ENCODE measurements at regions of chr9 and their contacts with region 1.

Region 1: GRCh38 chr9:72038890-72039410 is 21.5 kb downstream of the C9orf57 start:
- DNase-seq: peak; percentile 74 to 81
- ATAC-seq: peak; percentile 91 to 96
- H3K4me3 ChIP-seq: no peak overlapping the region
- H3K27ac ChIP-seq: no peak overlapping the region; a peak in 2 of 6 replicates
- H3K4me1 ChIP-seq: peaks cover 7% of the 10 kb centered on the region; the same call in 2 of the 3 replicates
- CTCF ChIP-seq: peak; percentile 90
- EP300 ChIP-seq: no peak
- POLR2A ChIP-seq: no peak
- RAD21 ChIP-seq: peak; percentile 98

Region 2: GRCh38 chr9:71549023-71549422 is 489.9 kb before region 1 on chr9:
- CTCF ChIA-PET with region 1: no interaction called
- POLR2A ChIA-PET with region 1: no interaction called
- DNase-seq: no peak
- ATAC-seq: no peak
- H3K4me3 ChIP-seq: no peak overlapping the region
- H3K27ac ChIP-seq: no peak overlapping the region
- H3K4me1 ChIP-seq: 0 out of 3 replicates have a peak, but pooled peaks cover 4% of the 10 kb centered on the region
- CTCF ChIP-seq: no peak
- EP300 ChIP-seq: no peak
- POLR2A ChIP-seq: no peak
- RAD21 ChIP-seq: no peak

Region 3: DNA sequence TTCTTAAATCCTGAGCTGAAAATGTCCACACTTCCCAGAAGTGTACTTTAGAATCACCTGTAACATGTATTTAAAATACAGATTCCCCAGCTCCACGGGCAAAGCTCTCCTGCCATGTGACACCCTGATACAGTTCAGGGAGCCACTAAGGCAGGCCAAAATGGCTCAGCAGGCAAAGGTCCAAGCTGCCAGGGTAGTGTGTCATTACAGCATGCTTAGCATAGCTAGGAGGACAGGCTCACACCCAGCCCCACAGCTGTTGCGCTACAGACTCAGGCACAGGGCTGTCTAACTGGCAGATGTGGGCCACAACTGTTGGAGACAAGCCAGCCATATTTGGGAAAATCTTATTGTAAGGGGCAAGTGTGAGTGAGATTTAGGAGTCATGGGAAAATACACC is 54.5 kb before region 1 on chr9:
- CTCF ChIA-PET with region 1: no interaction called
- POLR2A ChIA-PET with region 1: no interaction called
- DNase-seq: no peak
- ATAC-seq: no peak
- H3K4me3 ChIP-seq: no peak overlapping the region
- H3K27ac ChIP-seq: no peak overlapping the region
- H3K4me1 ChIP-seq: no peaks in the 10 kb centered on the region
- CTCF ChIP-seq: no peak
- EP300 ChIP-seq: no peak
- POLR2A ChIP-seq: no peak
- RAD21 ChIP-seq: no peak

Region 4: DNA sequence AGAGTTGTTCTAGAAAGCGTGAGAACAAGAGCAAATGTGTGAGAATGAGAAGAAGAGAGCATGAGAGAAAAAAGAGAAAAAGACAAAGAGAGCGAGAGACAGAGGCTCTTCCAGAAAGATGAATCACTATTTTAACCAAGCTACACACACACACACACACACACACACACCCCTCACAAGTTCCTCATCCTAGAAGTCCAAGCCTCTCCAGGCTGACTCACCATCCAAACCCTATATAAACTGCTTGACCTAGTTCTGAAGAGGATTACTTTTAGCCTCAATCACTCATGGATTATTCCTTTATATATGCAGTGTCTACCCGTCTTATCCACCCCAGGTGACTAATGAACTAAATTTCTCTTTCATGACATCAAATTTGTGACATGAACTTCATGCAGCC is 16.1 kb before region 1 on chr9:
- CTCF ChIA-PET with region 1: interaction called, 44 read pairs
- POLR2A ChIA-PET with region 1: no interaction called
- DNase-seq: peak in 1 of 2 experiments; percentile 58
- ATAC-seq: peak in 1 of 2 experiments; percentile 49; a peak in 2 of 6 replicates
- H3K4me3 ChIP-seq: no peak overlapping the region
- H3K27ac ChIP-seq: no peak overlapping the region
- H3K4me1 ChIP-seq: peaks cover 10% of the 10 kb centered on the region; the same call in 2 of the 3 replicates
- CTCF ChIP-seq: no peak
- EP300 ChIP-seq: no peak
- POLR2A ChIP-seq: no peak
- RAD21 ChIP-seq: no peak

Region 5: GRCh38 chr9:72065076-72065475 is 26.1 kb after region 1 on chr9:
- CTCF ChIA-PET with region 1: interaction called, 13 read pairs
- POLR2A ChIA-PET with region 1: no interaction called
- DNase-seq: no peak
- ATAC-seq: peak in 1 of 2 experiments; percentile 43; a peak in 3 of 6 replicates
- H3K4me3 ChIP-seq: no peak overlapping the region
- H3K27ac ChIP-seq: no peak overlapping the region
- H3K4me1 ChIP-seq: no peaks in the 10 kb centered on the region
- CTCF ChIP-seq: no peak
- EP300 ChIP-seq: no peak
- POLR2A ChIP-seq: no peak
- RAD21 ChIP-seq: no peak

Region 6: DNA sequence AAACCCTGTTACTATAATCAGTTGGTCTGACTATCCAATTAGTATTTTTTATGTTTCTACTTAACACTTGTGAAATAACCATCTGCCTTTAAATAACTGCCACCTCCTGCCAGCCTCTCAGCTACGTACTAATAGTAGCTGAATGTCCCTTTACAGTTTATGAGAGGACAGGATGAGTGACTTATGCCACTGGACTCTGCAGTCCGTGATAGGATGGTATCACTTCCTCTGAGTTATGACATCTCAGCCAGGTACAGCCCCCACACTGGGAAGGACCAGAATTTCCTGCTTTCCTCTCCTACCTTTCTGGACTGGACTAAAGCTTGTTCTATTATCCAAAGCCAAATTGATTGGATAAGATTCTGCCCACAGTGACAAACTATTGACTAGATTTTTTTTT is 223.1 kb after region 1 on chr9:
- CTCF ChIA-PET with region 1: interaction called, 11 read pairs
- POLR2A ChIA-PET with region 1: no interaction called
- DNase-seq: no peak
- ATAC-seq: 0 out of 6 replicates have a peak, but pooled peaks of 1 of the 2 experiments have one; percentile 19
- H3K4me3 ChIP-seq: no peak overlapping the region
- H3K27ac ChIP-seq: no peak overlapping the region
- H3K4me1 ChIP-seq: no peaks in the 10 kb centered on the region
- CTCF ChIP-seq: no peak
- EP300 ChIP-seq: no peak
- POLR2A ChIP-seq: no peak
- RAD21 ChIP-seq: no peak

Region 7: DNA sequence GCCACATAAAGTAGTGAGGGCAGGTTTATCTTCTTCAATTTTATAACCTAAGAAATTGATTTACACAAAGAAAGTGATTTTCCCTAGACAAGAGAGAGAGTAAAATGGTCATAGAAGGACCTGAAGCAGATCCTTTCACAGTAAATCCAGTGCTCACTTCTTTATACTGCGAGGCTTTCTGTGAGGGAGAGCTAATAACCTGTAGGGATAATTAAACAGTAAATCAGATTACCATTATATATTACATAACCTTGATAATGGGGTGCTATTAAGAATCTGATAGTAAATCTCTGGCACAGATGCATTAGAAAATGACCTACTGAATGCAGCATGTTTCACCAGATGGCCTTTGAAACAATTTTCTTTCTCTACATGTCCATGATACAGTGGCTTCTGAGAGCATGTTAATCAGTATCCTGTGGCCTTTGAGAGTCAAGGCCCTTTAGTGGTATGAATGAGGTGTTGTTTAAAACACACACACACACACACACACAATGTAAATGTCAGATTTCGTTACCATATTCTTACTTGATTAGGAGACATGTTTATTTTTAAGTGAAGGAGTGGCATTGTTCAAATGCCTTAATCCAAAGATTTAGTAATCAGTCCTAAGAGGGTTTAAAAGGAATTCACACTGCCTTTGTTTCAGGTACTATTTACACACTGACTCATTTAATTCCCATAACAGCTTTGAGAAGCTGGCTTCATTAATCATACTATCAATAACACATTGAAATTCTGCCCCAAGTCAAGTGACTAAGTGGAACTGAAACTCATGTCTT is 789.2 kb after region 1 on chr9:
- CTCF ChIA-PET with region 1: interaction called, 46 read pairs
- POLR2A ChIA-PET with region 1: no interaction called
- DNase-seq: peak; percentile 44 to 86
- ATAC-seq: peak; percentile 82 to 84
- H3K4me3 ChIP-seq: no peak overlapping the region
- H3K27ac ChIP-seq: peak overlapping the region; percentile 77 to 87
- H3K4me1 ChIP-seq: peaks cover 47% of the 10 kb centered on the region
- CTCF ChIP-seq: no peak
- EP300 ChIP-seq: peak; percentile 70 to 84; a peak in 3 of 5 replicates
- POLR2A ChIP-seq: no peak
- RAD21 ChIP-seq: peak in 1 of 2 experiments; percentile 14; a peak in 1 of 5 replicates

Region 8: DNA sequence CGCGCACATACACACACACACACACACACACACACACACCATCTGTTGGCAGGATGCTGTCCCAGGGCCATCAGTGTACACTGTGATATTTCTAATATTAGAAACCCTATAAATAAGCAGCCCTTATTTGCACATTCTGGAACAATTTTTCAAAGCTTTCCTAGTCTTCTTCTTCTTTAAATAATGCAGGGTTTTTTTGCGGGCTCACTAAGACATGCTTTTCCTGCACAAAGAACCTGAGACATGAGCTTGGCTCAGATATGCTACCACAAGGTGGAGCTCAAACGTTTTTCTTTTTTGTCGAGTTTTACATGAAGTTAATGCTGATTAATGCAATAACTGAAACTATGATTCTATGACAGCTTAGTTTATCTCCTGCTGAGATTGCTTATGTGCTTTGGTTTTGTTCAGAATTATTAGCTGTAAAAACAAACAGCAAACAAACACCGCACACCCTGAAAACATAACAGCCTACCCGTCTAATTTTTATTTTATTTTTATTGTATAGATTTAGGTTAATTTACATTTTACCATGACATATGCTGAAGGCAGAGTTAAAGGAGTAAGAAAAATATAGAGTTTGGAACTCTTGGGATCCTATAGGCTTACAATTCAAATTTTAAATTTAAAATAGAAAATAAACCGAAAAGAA is 818.1 kb after region 1 on chr9:
- CTCF ChIA-PET with region 1: interaction called, 11 read pairs
- POLR2A ChIA-PET with region 1: no interaction called
- DNase-seq: peak; percentile 66 to 92
- ATAC-seq: peak; percentile 75
- H3K4me3 ChIP-seq: no peak overlapping the region
- H3K27ac ChIP-seq: peak overlapping the region; percentile 92 to 93
- H3K4me1 ChIP-seq: peaks cover 43% of the 10 kb centered on the region
- CTCF ChIP-seq: peak; percentile 82
- EP300 ChIP-seq: no peak
- POLR2A ChIP-seq: no peak
- RAD21 ChIP-seq: peak; percentile 80 to 82